MCF 10A (cell line): ENCODE measurements at regions of chr12 and their contacts with region 1.

Region 1: DNA sequence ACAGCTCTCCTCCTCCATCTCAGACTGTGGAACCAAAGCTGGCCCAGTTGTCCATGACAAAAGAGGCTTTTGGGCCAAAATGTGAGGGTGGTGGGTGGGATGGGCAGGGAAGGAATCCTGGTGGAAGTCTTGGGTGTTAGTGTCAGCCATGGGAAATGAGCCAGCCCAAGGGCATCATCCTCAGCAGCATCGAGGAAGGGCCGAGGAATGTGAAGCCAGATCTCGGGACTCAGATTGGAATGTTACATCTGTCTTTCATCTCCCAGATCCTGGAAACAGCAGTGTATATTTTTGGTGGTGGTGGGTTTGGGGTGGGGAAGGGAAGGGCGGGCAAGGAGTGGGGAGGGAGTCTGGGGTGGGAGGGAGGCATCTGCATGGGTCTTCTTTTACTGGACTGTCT is 11.8 kb upstream of the TAMALIN start:
- DNase-seq: no peak
- H3K4me3 Mint-ChIP-seq: no peak overlapping the region
- H3K27ac Mint-ChIP-seq: no peak overlapping the region
- H3K4me1 Mint-ChIP-seq: peaks cover 5% of the 10 kb centered on the region
- H3K27me3 Mint-ChIP-seq: no peaks in the 10 kb centered on the region
- CTCF ChIP-seq: no peak

Region 2: DNA sequence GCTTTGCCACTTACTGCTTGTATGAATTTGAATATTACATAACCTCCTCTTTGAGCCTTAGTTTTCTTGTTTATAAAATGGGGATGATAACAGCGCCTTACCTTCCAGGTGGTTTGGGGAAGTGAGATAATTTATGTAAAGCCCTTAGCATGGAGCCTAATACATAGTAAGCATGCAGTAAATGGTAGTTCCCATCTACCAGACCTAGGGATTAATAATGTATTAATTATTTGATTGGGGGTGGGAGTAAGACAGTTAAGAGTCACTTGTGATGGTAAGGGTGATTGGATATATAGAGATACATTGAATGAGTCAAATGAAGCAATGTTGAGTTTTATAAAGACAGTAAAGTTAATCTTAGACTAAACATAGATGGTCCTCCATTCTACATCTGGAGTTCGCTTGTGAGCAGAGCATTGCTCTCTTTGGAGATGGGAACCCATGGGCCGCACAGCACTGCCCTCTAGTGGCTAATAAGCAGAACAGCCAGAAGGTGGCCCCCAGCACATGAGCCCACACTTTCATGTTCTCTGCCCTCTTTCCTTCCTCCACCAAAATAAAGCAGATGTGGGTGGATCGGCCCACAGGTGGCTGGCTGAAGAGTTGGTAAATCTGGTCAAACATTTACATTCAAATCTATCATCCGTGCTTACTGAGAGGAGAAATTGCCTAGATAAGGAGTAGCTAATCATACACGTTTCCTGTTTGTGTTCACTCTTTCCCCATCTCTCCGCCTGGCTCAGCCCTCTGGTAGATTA is 14.7 kb before region 1 on chr12:
- CTCF ChIA-PET with region 1: interaction called, 17 read pairs
- POLR2A ChIA-PET with region 1: no interaction called
- intact Hi-C with region 1: no loop called
- DNase-seq: peak; percentile 80
- H3K4me3 Mint-ChIP-seq: no peak overlapping the region
- H3K27ac Mint-ChIP-seq: no peak overlapping the region
- H3K4me1 Mint-ChIP-seq: no peaks in the 10 kb centered on the region
- H3K27me3 Mint-ChIP-seq: no peaks in the 10 kb centered on the region
- CTCF ChIP-seq: peak; percentile 86

Region 3: GRCh38 chr12:52032804-52033502 is 38.0 kb after region 1 on chr12:
- CTCF ChIA-PET with region 1: interaction called, 258 read pairs
- POLR2A ChIA-PET with region 1: interaction called, 4 read pairs
- intact Hi-C with region 1: no loop called
- DNase-seq: peak; percentile 95
- H3K4me3 Mint-ChIP-seq: peak overlapping the region; percentile 71
- H3K27ac Mint-ChIP-seq: peak overlapping the region; percentile 83
- H3K4me1 Mint-ChIP-seq: peaks cover 10% of the 10 kb centered on the region
- H3K27me3 Mint-ChIP-seq: peaks cover 10% of the 10 kb centered on the region
- CTCF ChIP-seq: no peak

Region 4: GRCh38 chr12:52082988-52083637 is 88.2 kb after region 1 on chr12:
- CTCF ChIA-PET with region 1: interaction called, 20 read pairs
- POLR2A ChIA-PET with region 1: no interaction called
- intact Hi-C with region 1: no loop called
- DNase-seq: peak; percentile 54
- H3K4me3 Mint-ChIP-seq: no peak overlapping the region
- H3K27ac Mint-ChIP-seq: no peak overlapping the region
- H3K4me1 Mint-ChIP-seq: peaks cover 14% of the 10 kb centered on the region
- H3K27me3 Mint-ChIP-seq: peaks cover 28% of the 10 kb centered on the region
- CTCF ChIP-seq: peak; percentile 95

Region 5: GRCh38 chr12:52258335-52258901 is 263.5 kb after region 1 on chr12:
- CTCF ChIA-PET with region 1: no interaction called
- POLR2A ChIA-PET with region 1: no interaction called
- intact Hi-C with region 1: no loop called
- DNase-seq: no peak
- H3K4me3 Mint-ChIP-seq: no peak overlapping the region
- H3K27ac Mint-ChIP-seq: no peak overlapping the region
- H3K4me1 Mint-ChIP-seq: peaks cover 29% of the 10 kb centered on the region
- H3K27me3 Mint-ChIP-seq: no peaks in the 10 kb centered on the region
- CTCF ChIP-seq: no peak